Naive thymus-derived CD4-positive, alpha-beta T cell (primary cell): ENCODE measurements at regions of chr12 and their contacts with region 1.

Region 1: GRCh38 chr12:4107436-4107878 is 166.1 kb upstream of the CCND2 start:
- DNase-seq: peak in 8 of 9 donors; percentile 57 to 83 (median 76)
- ATAC-seq: peak; percentile 99
- H3K4me3 ChIP-seq: no peak overlapping the region
- H3K4me3 Mint-ChIP-seq: peak overlapping the region in 7 of 10 donors; percentile 21 to 74 (median 52)
- H3K27ac ChIP-seq: no peak overlapping the region
- H3K27ac Mint-ChIP-seq: peak overlapping the region in 8 of 9 donors; percentile 6 to 88 (median 55)
- H3K4me1 ChIP-seq: peaks cover 0 to 3% of the 10 kb centered on the region in 2 donors
- H3K4me1 Mint-ChIP-seq: peaks cover 6 to 51% (median 13%) of the 10 kb centered on the region in 7 donors
- H3K27me3 ChIP-seq: no peaks in the 10 kb centered on the region
- H3K27me3 Mint-ChIP-seq: peaks cover 0 to 7% (median 0%) of the 10 kb centered on the region in 5 donors

Region 2: GRCh38 chr12:3998968-3999826 is 108.3 kb before region 1 on chr12:
- CTCF ChIA-PET with region 1: no interaction called
- POLR2A ChIA-PET with region 1: no interaction called
- intact Hi-C with region 1: loop called (anchors 1 kb)
- DNase-seq: peak in 5 of 9 donors; percentile 15 to 37 (median 21)
- ATAC-seq: peak; percentile 58
- H3K4me3 ChIP-seq: no peak overlapping the region
- H3K4me3 Mint-ChIP-seq: no peak overlapping the region
- H3K27ac ChIP-seq: no peak overlapping the region
- H3K27ac Mint-ChIP-seq: peak overlapping the region in 3 of 9 donors; percentile 18 to 37 (median 36)
- H3K4me1 ChIP-seq: peaks cover 0 to 11% of the 10 kb centered on the region in 2 donors
- H3K4me1 Mint-ChIP-seq: peaks cover 2 to 49% (median 39%) of the 10 kb centered on the region in 7 donors
- H3K27me3 ChIP-seq: no peaks in the 10 kb centered on the region
- H3K27me3 Mint-ChIP-seq: peaks cover 0 to under 1% (median 0%) of the 10 kb centered on the region in 5 donors

Region 3: DNA sequence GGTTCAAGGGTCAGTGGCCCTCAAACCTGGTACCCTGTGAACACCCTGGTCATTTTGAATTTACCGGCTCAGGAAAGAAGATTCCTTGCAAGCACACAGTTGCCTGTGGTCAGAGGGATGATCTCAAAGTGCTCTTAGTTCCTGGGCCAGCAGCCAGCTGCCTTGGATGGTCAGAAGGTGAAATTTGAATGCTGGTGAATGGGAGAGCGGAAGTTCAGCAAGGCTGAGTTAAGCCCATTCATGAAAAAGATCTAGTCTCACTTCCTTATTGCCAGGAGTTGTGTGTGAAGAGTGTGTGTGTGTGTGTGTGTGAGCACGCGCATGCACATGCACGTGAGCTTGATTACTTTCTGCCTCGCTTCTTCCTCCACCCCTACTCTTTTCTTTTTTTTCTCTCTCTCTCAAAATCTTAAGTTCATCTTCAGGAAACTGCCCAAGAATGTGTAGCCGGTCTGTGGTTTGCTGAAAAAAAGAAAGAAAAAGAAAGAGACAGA is 10.6 kb after region 1 on chr12:
- CTCF ChIA-PET with region 1: interaction called, 3 read pairs
- POLR2A ChIA-PET with region 1: interaction called, 7 read pairs
- intact Hi-C with region 1: loop called in 1 of 2 experiments (anchors 1 kb)
- DNase-seq: peak in 6 of 9 donors; percentile 20 to 54 (median 32)
- ATAC-seq: peak; percentile 83
- H3K4me3 ChIP-seq: peak overlapping the region; percentile 17
- H3K4me3 Mint-ChIP-seq: peak overlapping the region; percentile 18 to 87 (median 78)
- H3K27ac ChIP-seq: no peak overlapping the region
- H3K27ac Mint-ChIP-seq: peak overlapping the region; percentile 22 to 86 (median 78)
- H3K4me1 ChIP-seq: peaks cover 29 to 30% of the 10 kb centered on the region in 2 donors
- H3K4me1 Mint-ChIP-seq: peaks cover 25 to 66% (median 44%) of the 10 kb centered on the region in 7 donors
- H3K27me3 ChIP-seq: no peaks in the 10 kb centered on the region
- H3K27me3 Mint-ChIP-seq: no peaks in the 10 kb centered on the region

Region 4: DNA sequence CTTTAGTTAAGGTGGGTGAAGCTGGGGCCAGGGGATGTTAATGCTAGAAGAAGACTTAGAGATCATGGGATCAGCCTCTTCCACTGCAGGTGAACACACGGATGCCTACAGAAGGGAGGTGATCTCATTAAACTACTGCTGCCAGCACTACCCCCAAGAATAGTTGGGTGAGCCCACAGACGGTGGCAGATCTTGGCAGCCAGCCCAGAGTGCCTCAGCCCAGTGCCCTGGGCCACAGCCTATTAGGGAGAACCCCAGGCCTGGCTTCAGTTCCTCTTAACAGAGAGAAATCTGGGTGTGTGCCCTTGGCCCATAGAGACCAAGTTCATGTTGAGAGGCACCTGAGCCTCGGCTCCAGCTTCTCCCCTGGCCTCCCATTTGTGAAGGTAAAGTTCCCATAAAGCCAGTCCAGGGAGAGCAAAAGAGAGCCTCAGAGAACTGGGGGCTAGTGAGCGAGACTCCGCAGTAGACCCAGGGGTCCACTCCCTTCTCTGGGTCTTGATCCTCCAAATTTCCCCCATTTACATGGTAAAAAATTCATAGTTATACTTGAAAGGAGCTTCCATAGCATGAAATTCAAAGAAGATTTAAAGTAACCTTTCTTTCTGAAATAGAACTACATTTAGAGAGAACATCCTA is 41.1 kb after region 1 on chr12:
- CTCF ChIA-PET with region 1: no interaction called
- POLR2A ChIA-PET with region 1: no interaction called
- intact Hi-C with region 1: loop called (anchors 1 kb)
- DNase-seq: peak in 1 of 9 donors; percentile 37
- ATAC-seq: peak; percentile 80
- H3K4me3 ChIP-seq: no peak overlapping the region
- H3K4me3 Mint-ChIP-seq: no peak overlapping the region
- H3K27ac ChIP-seq: no peak overlapping the region
- H3K27ac Mint-ChIP-seq: peak overlapping the region in 5 of 9 donors; percentile 14 to 70 (median 61)
- H3K4me1 ChIP-seq: peaks cover 13 to 41% of the 10 kb centered on the region in 2 donors
- H3K4me1 Mint-ChIP-seq: peaks cover 20 to 93% (median 34%) of the 10 kb centered on the region in 7 donors
- H3K27me3 ChIP-seq: no peaks in the 10 kb centered on the region
- H3K27me3 Mint-ChIP-seq: no peaks in the 10 kb centered on the region

Region 5: GRCh38 chr12:4164559-4165558 is 57.4 kb after region 1 on chr12:
- CTCF ChIA-PET with region 1: no interaction called
- POLR2A ChIA-PET with region 1: no interaction called
- intact Hi-C with region 1: loop called in 1 of 2 experiments (anchors 2 kb)
- DNase-seq: peak; percentile 43 to 65 (median 58)
- ATAC-seq: peak; percentile 93
- H3K4me3 ChIP-seq: peak overlapping the region; percentile 64
- H3K4me3 Mint-ChIP-seq: peak overlapping the region; percentile 82 to 94 (median 88)
- H3K27ac ChIP-seq: peak overlapping the region; percentile 71
- H3K27ac Mint-ChIP-seq: peak overlapping the region; percentile 82 to 98 (median 88)
- H3K4me1 ChIP-seq: peaks cover 4 to 6% of the 10 kb centered on the region in 2 donors
- H3K4me1 Mint-ChIP-seq: peaks cover 13 to 61% (median 20%) of the 10 kb centered on the region in 7 donors
- H3K27me3 ChIP-seq: no peaks in the 10 kb centered on the region
- H3K27me3 Mint-ChIP-seq: no peaks in the 10 kb centered on the region

Region 6: DNA sequence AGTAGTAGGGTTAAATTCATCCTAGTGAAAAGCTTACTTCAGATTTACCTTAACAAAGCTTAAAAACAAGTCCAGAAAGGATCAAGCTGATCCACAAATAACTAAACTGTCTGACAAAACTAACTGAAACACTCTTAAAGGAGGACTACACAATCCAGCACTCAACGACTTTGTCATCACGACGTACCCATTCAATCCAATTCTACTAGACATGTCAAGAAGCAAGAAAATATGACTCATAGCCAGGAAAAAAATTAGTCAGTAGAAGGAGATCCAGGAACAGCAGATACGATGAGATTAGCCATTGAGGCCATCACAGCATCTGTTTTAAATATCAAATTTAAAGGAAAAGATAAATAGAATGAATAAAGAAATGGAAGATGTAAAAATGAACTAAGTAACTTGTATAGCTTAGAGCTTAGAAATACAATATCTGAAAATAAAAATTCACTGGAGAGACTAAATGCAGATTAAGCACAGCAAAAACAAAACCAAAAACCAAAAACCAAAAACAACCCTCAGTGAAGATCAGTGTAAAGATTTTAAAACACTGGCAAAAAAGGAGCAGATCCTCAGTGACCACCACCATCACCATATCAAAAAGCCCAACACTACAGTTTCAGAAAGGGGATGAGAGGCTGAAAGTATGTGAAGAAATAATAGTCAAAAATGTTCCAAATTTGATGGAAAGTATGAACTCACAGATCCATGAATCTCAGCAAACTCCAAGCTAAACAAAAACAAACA is 71.1 kb after region 1 on chr12:
- CTCF ChIA-PET with region 1: no interaction called
- POLR2A ChIA-PET with region 1: no interaction called
- intact Hi-C with region 1: loop called in 1 of 2 experiments (anchors 2 kb)
- DNase-seq: no peak
- ATAC-seq: no peak
- H3K4me3 ChIP-seq: no peak overlapping the region
- H3K4me3 Mint-ChIP-seq: peak overlapping the region in 1 of 10 donors; percentile 43
- H3K27ac ChIP-seq: no peak overlapping the region
- H3K27ac Mint-ChIP-seq: peak overlapping the region in 1 of 9 donors; percentile 64
- H3K4me1 ChIP-seq: no peaks in the 10 kb centered on the region
- H3K4me1 Mint-ChIP-seq: peaks cover 0 to 22% (median 0%) of the 10 kb centered on the region in 7 donors
- H3K27me3 ChIP-seq: no peaks in the 10 kb centered on the region
- H3K27me3 Mint-ChIP-seq: peaks cover 0 to 5% (median 0%) of the 10 kb centered on the region in 5 donors

Region 7: DNA sequence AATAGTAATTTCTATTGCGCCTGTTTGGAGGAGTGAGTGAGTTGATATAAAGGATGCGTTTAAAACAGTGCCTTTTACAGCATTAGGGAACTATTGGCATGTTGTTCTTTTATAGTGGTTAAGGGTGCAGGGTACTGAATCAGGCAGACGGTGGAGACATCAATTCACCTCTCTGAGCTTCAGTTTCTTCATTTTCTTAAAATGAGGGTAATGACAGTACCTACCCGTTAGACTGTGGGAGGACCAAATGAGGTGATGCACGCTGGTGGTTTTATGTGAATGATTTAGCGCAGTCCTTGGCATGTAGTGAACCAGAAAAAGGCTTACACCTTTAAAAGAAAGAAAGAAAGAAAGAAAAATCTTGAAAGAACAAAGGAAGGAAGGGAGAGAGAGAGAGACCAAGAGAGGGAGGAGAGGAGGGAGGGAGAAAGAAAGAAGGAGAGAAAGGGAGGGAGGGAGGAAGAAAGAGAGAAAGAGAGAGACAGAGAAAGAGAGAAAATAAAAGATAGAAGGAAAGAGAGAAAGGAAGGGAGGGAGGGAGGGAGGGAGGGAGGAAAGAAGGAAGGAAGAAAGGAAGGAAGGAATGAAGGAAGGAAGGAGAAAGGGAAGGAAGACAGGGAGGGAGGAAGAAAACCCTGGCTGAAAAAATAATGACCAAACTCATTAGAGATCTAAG is 143.9 kb after region 1 on chr12:
- CTCF ChIA-PET with region 1: no interaction called
- POLR2A ChIA-PET with region 1: no interaction called
- intact Hi-C with region 1: loop called in 1 of 2 experiments (anchors 1 kb)
- DNase-seq: peak in 7 of 9 donors; percentile 23 to 62 (median 52)
- ATAC-seq: peak; percentile 85
- H3K4me3 ChIP-seq: no peak overlapping the region
- H3K4me3 Mint-ChIP-seq: peak overlapping the region in 5 of 10 donors; percentile 7 to 61 (median 23)
- H3K27ac ChIP-seq: no peak overlapping the region
- H3K27ac Mint-ChIP-seq: peak overlapping the region in 6 of 9 donors; percentile 1 to 43 (median 10)
- H3K4me1 ChIP-seq: peaks cover 0 to 6% of the 10 kb centered on the region in 2 donors
- H3K4me1 Mint-ChIP-seq: peaks cover 8 to 11% (median 9%) of the 10 kb centered on the region in 7 donors
- H3K27me3 ChIP-seq: no peaks in the 10 kb centered on the region
- H3K27me3 Mint-ChIP-seq: peaks cover 0 to 10% (median 7%) of the 10 kb centered on the region in 5 donors

Region 8: DNA sequence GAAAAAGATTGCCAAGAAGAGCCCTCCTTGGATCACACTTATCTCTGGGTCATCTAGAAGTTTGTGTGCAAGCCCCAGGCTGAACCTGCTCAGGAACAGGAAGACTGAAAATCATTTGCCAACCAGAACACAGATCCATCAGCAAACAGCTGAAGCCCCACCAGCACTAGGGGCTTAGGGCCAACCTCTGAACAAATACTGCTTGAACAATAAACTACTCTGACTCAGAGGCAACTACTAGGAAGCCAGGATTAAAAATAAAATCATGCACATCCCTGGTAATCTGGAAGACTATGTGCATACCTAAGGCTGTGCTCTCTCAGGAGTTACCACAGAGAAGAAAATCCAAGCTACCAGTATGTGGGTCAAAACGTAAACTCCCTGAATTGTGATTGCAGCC is 628.6 kb after region 1 on chr12:
- CTCF ChIA-PET with region 1: no interaction called
- POLR2A ChIA-PET with region 1: no interaction called
- intact Hi-C with region 1: no loop called
- DNase-seq: no peak
- ATAC-seq: no peak
- H3K4me3 ChIP-seq: no peak overlapping the region
- H3K4me3 Mint-ChIP-seq: no peak overlapping the region
- H3K27ac ChIP-seq: no peak overlapping the region
- H3K27ac Mint-ChIP-seq: no peak overlapping the region
- H3K4me1 ChIP-seq: no peaks in the 10 kb centered on the region
- H3K4me1 Mint-ChIP-seq: no peaks in the 10 kb centered on the region
- H3K27me3 ChIP-seq: no peaks in the 10 kb centered on the region
- H3K27me3 Mint-ChIP-seq: peaks cover 15 to 32% (median 18%) of the 10 kb centered on the region in 5 donors